ENCODE measurements at regions of chr14 and their contacts with region 1.

Region 1: GRCh38 chr14:23469127-23469905 is at the start of gene NGDN:
- DNase-seq: peak; percentile 91 to 98 (median 94)
- ATAC-seq: peak; percentile 98
- H3K4me3 ChIP-seq: peak within 1 kb of the TSS; percentile 59
- H3K4me1 ChIP-seq: peaks cover 9% of the 10 kb centered on the region
- CTCF ChIP-seq: peak; percentile 64
- total RNA-seq, gene NGDN: 29.1 to 35.3 (median 29.9) TPM

Region 2: DNA sequence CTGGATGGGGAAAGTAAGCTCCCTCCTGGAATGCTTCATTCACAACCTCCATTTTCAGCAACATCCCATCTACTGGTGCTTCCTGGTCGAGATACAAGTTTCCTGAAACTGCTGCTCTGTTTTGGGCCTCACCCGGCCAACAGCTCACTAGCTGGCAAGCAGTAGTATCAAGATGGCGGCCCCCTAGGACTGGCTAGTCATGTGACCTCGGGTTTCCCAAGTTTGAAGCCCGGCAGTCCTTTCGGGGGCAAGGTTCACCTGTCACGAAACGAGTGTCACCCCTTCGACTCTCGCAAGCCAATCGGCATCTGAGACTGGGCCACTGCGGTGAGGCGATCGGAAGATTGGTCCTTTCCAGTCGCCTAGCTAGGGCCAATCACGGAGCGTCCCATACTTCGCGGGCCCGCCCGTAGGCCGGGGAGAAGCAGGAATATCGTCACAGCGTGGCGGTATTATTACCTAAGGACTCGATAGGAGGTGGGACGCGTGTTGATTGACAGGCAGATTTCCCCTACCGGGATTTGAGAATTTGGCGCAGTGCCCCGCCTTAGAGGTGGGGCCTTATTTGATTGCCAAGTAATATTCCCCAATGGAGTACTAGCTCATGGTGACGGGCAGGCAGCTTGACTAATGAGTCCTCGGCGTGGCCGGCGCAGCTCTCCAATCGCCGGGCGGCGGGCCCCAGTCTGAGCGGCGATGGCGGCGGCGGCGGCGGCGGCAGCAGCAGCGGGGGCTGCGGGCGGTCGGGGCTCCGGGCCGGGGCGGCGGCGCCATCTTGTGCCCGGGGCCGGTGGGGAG is 148.3 kb before region 1 on chr14 and contains the start of gene PABPN1:
- intact Hi-C with region 1: loop called in 1 of 2 experiments (anchors 10 kb)
- DNase-seq: peak; percentile 98 to 99 (median 99)
- ATAC-seq: peak; percentile 93
- H3K4me3 ChIP-seq: peak within 1 kb of the TSS; percentile 91
- H3K4me1 ChIP-seq: peaks cover 10% of the 10 kb centered on the region
- CTCF ChIP-seq: no peak
- total RNA-seq, gene PABPN1: 157 to 185 (median 157) TPM

Region 3: GRCh38 chr14:23631702-23632460 is 162.6 kb after region 1 on chr14:
- intact Hi-C with region 1: no loop called
- DNase-seq: peak in 2 of 3 donors; percentile 67 to 85
- ATAC-seq: peak; percentile 97
- H3K4me3 ChIP-seq: no peak overlapping the region
- H3K4me1 ChIP-seq: no peaks in the 10 kb centered on the region
- CTCF ChIP-seq: peak; percentile 86

Measured in mucosa of descending colon (tissue), 3 donors.